ENCODE measurements at regions of chr14 and their contacts with region 1.

Region 1: DNA sequence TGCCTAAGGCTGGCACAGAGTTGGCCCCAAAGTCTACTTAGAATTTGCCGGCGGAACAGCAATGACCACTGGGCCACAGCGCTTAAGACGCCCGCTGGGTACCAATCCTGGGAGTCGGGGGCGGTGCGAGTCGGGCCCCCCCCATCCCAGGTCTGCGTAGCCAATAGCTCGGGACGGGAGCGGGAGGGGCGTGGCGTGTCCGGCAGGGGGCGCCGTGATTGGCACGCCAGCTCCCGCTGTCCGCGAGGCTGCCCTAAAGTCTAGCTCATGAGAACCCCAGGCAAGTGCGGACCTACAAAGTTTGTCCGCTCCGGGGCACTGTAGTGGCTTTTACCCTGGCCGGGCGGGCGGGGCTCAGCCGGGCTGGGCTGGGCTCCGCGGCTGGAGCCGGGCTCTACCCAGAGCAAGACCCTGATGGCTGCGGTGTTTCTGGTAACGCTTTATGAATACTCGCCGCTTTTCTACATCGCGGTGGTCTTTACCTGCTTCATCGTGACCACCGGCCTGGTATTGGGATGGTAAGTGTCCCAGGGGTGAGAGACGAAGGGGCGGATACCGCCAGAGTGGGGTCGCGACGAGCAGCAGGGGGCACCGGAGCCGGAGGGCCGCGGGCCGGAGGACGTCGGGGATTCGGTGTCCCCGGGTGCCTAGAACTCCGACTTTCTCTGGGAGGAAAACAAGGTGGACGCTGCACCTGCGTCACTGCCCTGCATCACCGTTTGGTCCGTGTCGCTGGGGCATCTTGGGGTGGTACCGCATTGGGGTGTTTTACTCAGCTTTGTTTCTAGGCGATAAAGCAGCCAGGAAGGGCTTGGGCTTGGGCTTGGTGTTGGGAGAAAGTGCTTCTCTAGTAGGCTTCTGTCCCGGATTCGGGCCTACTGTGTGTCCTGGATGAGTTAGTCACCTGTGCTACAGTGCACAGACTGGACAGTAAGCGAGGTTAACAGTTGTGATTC is at the start of gene CGRRF1:
- DNase-seq: peak; percentile 99
- H3K4me3 ChIP-seq: peak within 1 kb of the TSS; percentile 20 to 92 (median 91)
- H3K27ac ChIP-seq: peak within 1 kb of the TSS; percentile 10
- H3K4me1 ChIP-seq: peaks cover 9% of the 10 kb centered on the region
- H3K27me3 ChIP-seq: no peaks in the 10 kb centered on the region
- CTCF ChIP-seq: peak; percentile 18 to 65
- POLR2A ChIP-seq: peak; percentile 88
- total RNA-seq, gene CGRRF1: 15.7 and 15.8 TPM in 2 replicates

Region 2: DNA sequence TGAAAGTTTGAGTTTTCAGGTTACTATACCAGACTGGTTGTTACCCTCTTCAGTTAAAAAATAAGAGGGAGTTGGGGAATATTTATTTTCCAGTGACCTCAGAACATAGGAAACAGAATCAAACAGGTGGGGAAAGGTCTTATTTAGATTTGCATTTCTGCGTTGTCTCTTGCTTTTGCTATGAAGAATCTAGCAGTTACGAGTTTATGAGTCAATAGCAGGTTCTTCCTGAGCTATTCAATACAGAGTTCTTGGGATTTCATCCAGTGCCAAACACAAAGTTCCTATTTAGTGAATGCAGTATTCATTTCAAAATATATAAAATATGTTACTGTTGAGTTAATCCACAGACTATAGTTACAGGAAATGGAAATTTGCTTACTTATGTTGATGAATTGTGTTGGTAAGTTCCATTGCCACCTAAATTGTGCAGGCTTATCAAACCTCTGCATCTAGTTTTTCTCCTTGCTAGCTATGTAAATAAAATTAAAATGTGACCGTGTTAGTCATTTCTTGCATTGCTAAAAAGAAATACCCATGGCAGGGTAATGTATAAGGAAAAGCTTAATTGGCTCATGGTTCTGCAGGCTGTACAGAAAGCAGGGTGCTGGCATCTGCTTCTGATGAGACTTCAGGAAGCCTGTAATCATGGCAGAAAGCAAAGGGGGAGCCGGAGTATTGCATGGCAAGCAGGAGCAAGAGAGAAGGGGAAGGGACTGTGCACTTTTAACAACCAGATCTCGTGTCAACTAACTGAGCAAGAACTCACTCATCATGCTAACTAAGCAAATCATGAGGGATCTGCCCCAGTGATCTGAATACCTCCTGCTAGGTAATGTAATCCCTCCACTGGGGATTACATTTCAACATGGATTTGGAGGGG is 1180.4 kb after region 1 on chr14:
- CTCF ChIA-PET with region 1: no interaction called
- POLR2A ChIA-PET with region 1: no interaction called
- dilution Hi-C with region 1: no loop called
- intact Hi-C with region 1: loop called (anchors 10 kb)
- DNase-seq: peak; percentile 73
- H3K4me3 ChIP-seq: peak overlapping the region in 2 of 3 experiments; percentile 11 to 47
- H3K27ac ChIP-seq: peak overlapping the region; percentile 80
- H3K4me1 ChIP-seq: peaks cover 20% of the 10 kb centered on the region
- H3K27me3 ChIP-seq: no peaks in the 10 kb centered on the region
- CTCF ChIP-seq: no peak
- POLR2A ChIP-seq: no peak

Measured in endothelial cell of umbilical vein (primary cell).